HEK293 (cell line): ENCODE measurements at regions of chr3 and their contacts with region 1.

Region 1: GRCh38 chr3:194070634-194071409 is 65.1 kb upstream of the HES1 start:
- H3K4me3 ChIP-seq: peak overlapping the region; percentile 34
- H3K27ac ChIP-seq: peak overlapping the region; percentile 85
- H3K4me1 ChIP-seq: no peaks in the 10 kb centered on the region
- CTCF ChIP-seq: no peak

Region 2: GRCh38 chr3:194003125-194004057 is 67.4 kb before region 1 on chr3:
- CTCF ChIA-PET with region 1: no interaction called
- POLR2A ChIA-PET with region 1: interaction called, 10 read pairs
- H3K4me3 ChIP-seq: peak overlapping the region; percentile 24
- H3K27ac ChIP-seq: peak overlapping the region; percentile 93
- H3K4me1 ChIP-seq: peaks cover 4% of the 10 kb centered on the region
- CTCF ChIP-seq: no peak